Breast epithelium (tissue), 4 donors: ENCODE measurements at regions of chr2 and their contacts with region 1.

Region 1: GRCh38 chr2:126527836-126528507 is 128.0 kb upstream of the GYPC start:
- DNase-seq: peak in 1 of 2 donors; percentile 38
- H3K4me3 ChIP-seq: no peak overlapping the region
- H3K27ac ChIP-seq: no peak overlapping the region
- H3K4me1 ChIP-seq: no peaks in the 10 kb centered on the region
- H3K27me3 ChIP-seq: no peaks in the 10 kb centered on the region
- CTCF ChIP-seq: peak in 2 of 3 donors; percentile 23 to 31
- POLR2A ChIP-seq: no peak

Region 2: GRCh38 chr2:125822746-125823145 is 705.2 kb before region 1 on chr2:
- intact Hi-C with region 1: no loop called
- DNase-seq: no peak
- H3K4me3 ChIP-seq: no peak overlapping the region
- H3K27ac ChIP-seq: no peak overlapping the region
- H3K4me1 ChIP-seq: no peaks in the 10 kb centered on the region
- H3K27me3 ChIP-seq: no peaks in the 10 kb centered on the region
- CTCF ChIP-seq: no peak
- POLR2A ChIP-seq: no peak

Region 3: GRCh38 chr2:126558029-126558428 is 30.1 kb after region 1 on chr2:
- intact Hi-C with region 1: no loop called
- DNase-seq: no peak
- H3K4me3 ChIP-seq: no peak overlapping the region
- H3K27ac ChIP-seq: no peak overlapping the region
- H3K4me1 ChIP-seq: no peaks in the 10 kb centered on the region
- H3K27me3 ChIP-seq: no peaks in the 10 kb centered on the region
- CTCF ChIP-seq: no peak
- POLR2A ChIP-seq: no peak

Region 4: GRCh38 chr2:126771501-126772195 is 243.7 kb after region 1 on chr2:
- intact Hi-C with region 1: loop called (anchors 5 kb)
- DNase-seq: peak in 1 of 2 donors; percentile 39
- H3K4me3 ChIP-seq: no peak overlapping the region
- H3K27ac ChIP-seq: no peak overlapping the region
- H3K4me1 ChIP-seq: no peaks in the 10 kb centered on the region
- H3K27me3 ChIP-seq: peaks cover 0 to 3% of the 10 kb centered on the region in 2 donors
- CTCF ChIP-seq: no peak
- POLR2A ChIP-seq: no peak